ENCODE measurements at regions of chr7 and their contacts with region 1.

Region 1: DNA sequence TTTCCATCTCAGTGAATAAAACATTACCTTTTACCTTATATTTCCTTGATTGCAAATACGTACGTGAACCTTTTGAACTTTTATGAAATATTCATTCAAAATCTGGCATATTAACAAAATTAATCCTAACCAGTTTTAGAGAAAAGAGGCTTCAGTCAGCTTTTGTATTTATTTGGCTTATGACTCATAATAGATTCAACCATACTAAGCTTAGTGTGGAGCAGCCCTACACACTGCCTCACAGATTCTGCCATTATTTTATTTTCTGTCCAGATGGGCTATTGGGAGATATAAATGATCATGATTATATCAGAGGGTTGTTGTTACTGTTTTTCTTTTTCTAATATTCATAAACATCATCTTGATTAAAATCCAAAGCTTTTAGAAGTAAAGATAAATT is 325.5 kb downstream of the GPR37 start:
- DNase-seq: no peak
- ATAC-seq: no peak
- H3K4me3 ChIP-seq: no peak overlapping the region
- H3K27ac ChIP-seq: no peak overlapping the region
- H3K4me1 ChIP-seq: no peaks in the 10 kb centered on the region
- H3K27me3 ChIP-seq: no peaks in the 10 kb centered on the region
- CTCF ChIP-seq: no peak

Region 2: DNA sequence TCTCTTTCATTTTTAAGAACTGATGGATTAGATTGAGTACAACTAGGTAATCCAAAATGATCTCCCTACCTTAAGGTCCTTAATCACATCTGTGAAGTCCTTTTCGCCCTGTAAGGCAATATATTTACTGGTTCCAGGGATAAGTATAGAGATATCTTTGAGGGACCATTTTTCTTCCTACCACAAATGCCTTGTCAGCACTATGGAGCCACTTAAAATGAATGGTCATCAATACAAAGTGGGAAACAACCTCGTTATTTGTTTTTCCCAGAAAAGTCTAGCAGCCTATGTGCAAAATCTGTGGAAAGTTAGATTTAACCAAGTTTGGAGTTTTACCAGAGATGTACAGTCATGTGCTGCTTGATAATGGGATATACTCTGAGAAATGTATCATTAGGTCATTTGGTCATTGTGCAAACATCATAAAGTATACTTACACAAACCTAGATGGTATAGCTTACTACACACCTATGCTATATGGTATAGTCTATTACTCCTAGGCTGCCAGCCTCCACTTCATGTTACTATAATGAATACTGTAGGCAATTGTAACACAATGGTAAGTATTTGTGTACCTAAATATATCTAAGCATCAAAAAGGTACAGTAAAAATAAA is 41.0 kb before region 1 on chr7:
- intact Hi-C with region 1: loop called in 1 of 10 experiments (anchors 1 kb)
- DNase-seq: no peak
- ATAC-seq: no peak
- H3K4me3 ChIP-seq: no peak overlapping the region
- H3K27ac ChIP-seq: no peak overlapping the region
- H3K4me1 ChIP-seq: no peaks in the 10 kb centered on the region
- H3K27me3 ChIP-seq: no peaks in the 10 kb centered on the region
- CTCF ChIP-seq: no peak

Measured in heart right ventricle (tissue), 16 donors.